Common myeloid progenitor, CD34-positive (primary cell): ENCODE measurements at regions of chr5 and their contacts with region 1.

Region 1: GRCh38 chr5:14270209-14270702 is 127.1 kb downstream of the TRIO start:
- DNase-seq: peak; percentile 62 to 78 (median 73)
- H3K4me3 ChIP-seq: no peak overlapping the region
- H3K27ac ChIP-seq: no peak overlapping the region
- H3K4me1 ChIP-seq: peaks cover 0 to 39% (median 19%) of the 10 kb centered on the region in 4 experiments
- H3K27me3 ChIP-seq: no peaks in the 10 kb centered on the region

Region 2: DNA sequence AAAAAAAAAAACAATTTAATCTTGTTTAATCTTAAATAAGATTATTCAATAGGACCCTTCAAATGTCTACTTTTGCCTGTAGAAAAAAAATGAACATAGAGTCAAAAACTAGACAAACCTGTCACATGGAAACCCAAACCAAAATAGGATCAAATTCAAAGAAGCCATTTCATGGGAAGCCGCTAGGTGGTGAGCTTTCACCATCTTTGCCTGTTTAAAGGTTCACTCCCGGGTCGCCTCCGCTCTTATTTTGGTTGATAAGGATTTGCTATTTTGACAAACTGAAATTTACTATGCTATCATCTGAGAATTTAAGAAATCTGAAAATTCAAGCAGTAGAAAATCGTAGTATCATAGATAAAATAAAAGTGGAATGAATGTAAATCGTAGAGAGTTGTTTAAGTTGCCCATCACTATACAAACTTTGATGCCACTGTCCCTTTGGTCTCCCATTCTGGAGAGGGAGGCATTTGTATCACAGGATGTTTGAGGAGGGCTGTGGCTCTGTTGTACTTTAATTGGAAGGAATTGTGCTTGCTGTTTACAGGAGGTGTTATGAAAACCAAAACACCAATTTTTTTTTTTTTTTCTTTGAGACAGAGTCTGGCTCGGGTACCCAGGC is 282.3 kb before region 1 on chr5:
- CTCF ChIA-PET with region 1: interaction called, 17 read pairs
- POLR2A ChIA-PET with region 1: no interaction called
- DNase-seq: peak; percentile 61 to 71 (median 68)
- H3K4me3 ChIP-seq: no peak overlapping the region
- H3K27ac ChIP-seq: no peak overlapping the region
- H3K4me1 ChIP-seq: no peaks in the 10 kb centered on the region
- H3K27me3 ChIP-seq: peaks cover 0 to 6% (median 0%) of the 10 kb centered on the region in 5 experiments

Region 3: DNA sequence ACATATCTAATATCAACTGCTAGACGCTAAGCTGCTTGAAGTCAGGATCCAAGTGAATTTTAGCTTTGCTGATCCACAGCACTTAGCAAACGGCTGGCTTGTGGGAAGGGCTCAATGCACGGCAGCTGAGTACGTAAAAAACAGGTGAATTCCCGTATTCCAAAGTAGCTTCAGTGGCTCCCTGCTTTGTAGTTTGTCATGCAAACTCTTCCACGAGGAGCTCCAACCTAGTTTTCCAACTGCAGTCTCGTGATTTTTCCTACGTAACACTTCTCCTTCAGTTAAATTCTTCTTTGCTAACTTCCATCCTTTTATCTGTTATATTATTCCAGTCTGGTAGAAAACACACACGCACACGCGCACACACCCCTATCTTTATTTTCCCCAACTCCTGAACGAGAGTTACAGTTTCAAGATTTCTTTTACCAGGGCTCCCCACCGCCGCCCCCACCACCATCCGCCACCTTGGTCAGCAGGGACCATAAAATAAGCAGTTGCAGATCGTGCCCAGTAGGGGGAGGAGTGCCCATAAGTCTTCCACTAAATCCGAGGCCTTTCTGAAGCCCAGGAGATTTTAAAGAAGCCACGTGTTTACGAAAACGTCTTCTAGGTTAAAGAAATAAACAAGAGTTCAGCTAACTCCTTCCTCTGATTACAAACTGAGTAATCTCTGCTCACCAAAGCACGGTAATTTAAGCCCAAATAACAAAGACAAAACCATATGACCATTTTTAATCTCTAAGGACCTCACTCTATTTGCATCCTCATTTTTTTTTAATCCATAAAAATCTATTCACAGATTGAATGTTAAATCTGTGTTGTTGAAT is 161.9 kb before region 1 on chr5:
- CTCF ChIA-PET with region 1: interaction called, 57 read pairs
- POLR2A ChIA-PET with region 1: no interaction called
- DNase-seq: peak; percentile 78 to 89 (median 87)
- H3K4me3 ChIP-seq: peak overlapping the region in 3 of 7 experiments; percentile 11 to 53 (median 50)
- H3K27ac ChIP-seq: no peak overlapping the region
- H3K4me1 ChIP-seq: peaks cover 3 to 8% (median 4%) of the 10 kb centered on the region in 4 experiments
- H3K27me3 ChIP-seq: peaks cover 0 to 2% (median 0%) of the 10 kb centered on the region in 5 experiments

Region 4: GRCh38 chr5:14118527-14119320 is 151.5 kb before region 1 on chr5:
- CTCF ChIA-PET with region 1: interaction called, 18 read pairs
- POLR2A ChIA-PET with region 1: no interaction called
- DNase-seq: peak in 1 of 3 donors; percentile 13
- H3K4me3 ChIP-seq: no peak overlapping the region
- H3K27ac ChIP-seq: no peak overlapping the region
- H3K4me1 ChIP-seq: no peaks in the 10 kb centered on the region
- H3K27me3 ChIP-seq: no peaks in the 10 kb centered on the region

Region 5: GRCh38 chr5:14142827-14143548 is 127.3 kb before region 1 on chr5 and contains the start of gene TRIO:
- CTCF ChIA-PET with region 1: interaction called, 45 read pairs
- POLR2A ChIA-PET with region 1: no interaction called
- DNase-seq: peak; percentile 67 to 82 (median 77)
- H3K4me3 ChIP-seq: peak within 1 kb of the TSS; percentile 79 to 94 (median 83)
- H3K27ac ChIP-seq: peak within 1 kb of the TSS; percentile 46 to 66
- H3K4me1 ChIP-seq: peaks cover 9 to 36% (median 26%) of the 10 kb centered on the region in 4 experiments
- H3K27me3 ChIP-seq: no peaks in the 10 kb centered on the region

Region 6: GRCh38 chr5:14168144-14168792 is 102.0 kb before region 1 on chr5:
- CTCF ChIA-PET with region 1: interaction called, 12 read pairs
- POLR2A ChIA-PET with region 1: no interaction called
- DNase-seq: peak in 2 of 3 donors; percentile 42 to 59
- H3K4me3 ChIP-seq: peak overlapping the region in 2 of 7 experiments; percentile 6 to 14
- H3K27ac ChIP-seq: no peak overlapping the region
- H3K4me1 ChIP-seq: peaks cover 23 to 62% (median 42%) of the 10 kb centered on the region in 4 experiments
- H3K27me3 ChIP-seq: no peaks in the 10 kb centered on the region

Region 7: DNA sequence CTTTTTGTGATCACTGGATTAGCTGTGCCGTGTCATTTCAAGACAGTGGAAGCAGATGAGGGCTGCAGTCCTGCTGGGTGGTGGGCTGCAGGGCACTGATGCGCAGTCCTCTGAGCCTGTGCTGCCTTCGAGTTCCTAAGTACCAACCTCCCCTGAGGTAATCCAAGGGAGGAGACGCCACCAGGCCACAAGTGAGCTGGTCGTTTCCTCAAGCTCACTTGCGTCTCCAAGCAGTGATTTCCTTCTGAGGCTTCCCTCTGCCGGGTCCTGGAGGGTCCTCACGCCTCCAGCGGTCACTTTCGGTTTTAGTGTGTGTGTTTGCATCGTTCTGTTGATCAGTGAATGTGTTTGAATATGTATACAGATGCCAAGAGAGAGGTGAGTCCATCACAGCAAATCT is 11.4 kb before region 1 on chr5:
- CTCF ChIA-PET with region 1: interaction called, 23 read pairs
- POLR2A ChIA-PET with region 1: no interaction called
- DNase-seq: peak; percentile 38 to 83 (median 77)
- H3K4me3 ChIP-seq: peak overlapping the region in 4 of 7 experiments; percentile 1 to 59 (median 18)
- H3K27ac ChIP-seq: no peak overlapping the region
- H3K4me1 ChIP-seq: peaks cover 0 to 38% (median 16%) of the 10 kb centered on the region in 4 experiments
- H3K27me3 ChIP-seq: no peaks in the 10 kb centered on the region